AG04449 (cell line): ENCODE measurements at regions of chr15 and their contacts with region 1.

Region 1: DNA sequence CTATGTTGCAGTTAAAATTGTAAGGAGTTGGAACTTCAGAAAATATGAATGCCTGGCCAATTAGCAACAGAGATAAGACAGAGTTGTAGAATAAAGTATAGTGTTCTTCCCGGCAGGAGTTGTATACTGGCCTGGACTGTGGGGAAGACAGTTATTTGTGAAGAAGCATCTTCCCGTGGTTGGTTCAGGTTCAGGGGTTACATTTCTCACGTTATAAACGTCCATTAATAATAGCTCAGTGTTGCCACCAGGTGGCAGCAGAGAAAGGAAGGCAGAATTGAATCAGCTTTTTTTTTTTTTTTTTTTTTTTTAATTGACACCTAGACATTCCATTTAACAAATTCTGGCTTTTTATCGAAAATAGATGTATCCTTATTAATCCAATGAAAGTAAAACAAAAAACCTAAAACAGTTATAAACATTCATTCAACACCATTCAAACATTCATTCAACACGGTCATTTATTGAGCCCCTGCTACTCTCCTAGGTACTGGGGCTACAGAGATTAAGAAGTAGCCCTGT is 66.4 kb upstream of the NR2E3 start:
- DNase-seq: no peak
- H3K4me3 ChIP-seq: no peak overlapping the region
- CTCF ChIP-seq: peak; percentile 48

Region 2: GRCh38 chr15:71448688-71449114 is 295.2 kb before region 1 on chr15:
- CTCF ChIA-PET with region 1: interaction called, 18 read pairs
- POLR2A ChIA-PET with region 1: no interaction called
- DNase-seq: no peak
- H3K4me3 ChIP-seq: no peak overlapping the region
- CTCF ChIP-seq: peak; percentile 75

Region 3: GRCh38 chr15:71716990-71717389 is 26.9 kb before region 1 on chr15:
- CTCF ChIA-PET with region 1: interaction called, 12 read pairs
- POLR2A ChIA-PET with region 1: no interaction called
- DNase-seq: no peak
- H3K4me3 ChIP-seq: no peak overlapping the region
- CTCF ChIP-seq: no peak

Region 4: GRCh38 chr15:71761649-71762369 is 17.9 kb after region 1 on chr15:
- CTCF ChIA-PET with region 1: interaction called, 19 read pairs
- POLR2A ChIA-PET with region 1: no interaction called
- DNase-seq: no peak
- H3K4me3 ChIP-seq: no peak overlapping the region
- CTCF ChIP-seq: no peak

Region 5: DNA sequence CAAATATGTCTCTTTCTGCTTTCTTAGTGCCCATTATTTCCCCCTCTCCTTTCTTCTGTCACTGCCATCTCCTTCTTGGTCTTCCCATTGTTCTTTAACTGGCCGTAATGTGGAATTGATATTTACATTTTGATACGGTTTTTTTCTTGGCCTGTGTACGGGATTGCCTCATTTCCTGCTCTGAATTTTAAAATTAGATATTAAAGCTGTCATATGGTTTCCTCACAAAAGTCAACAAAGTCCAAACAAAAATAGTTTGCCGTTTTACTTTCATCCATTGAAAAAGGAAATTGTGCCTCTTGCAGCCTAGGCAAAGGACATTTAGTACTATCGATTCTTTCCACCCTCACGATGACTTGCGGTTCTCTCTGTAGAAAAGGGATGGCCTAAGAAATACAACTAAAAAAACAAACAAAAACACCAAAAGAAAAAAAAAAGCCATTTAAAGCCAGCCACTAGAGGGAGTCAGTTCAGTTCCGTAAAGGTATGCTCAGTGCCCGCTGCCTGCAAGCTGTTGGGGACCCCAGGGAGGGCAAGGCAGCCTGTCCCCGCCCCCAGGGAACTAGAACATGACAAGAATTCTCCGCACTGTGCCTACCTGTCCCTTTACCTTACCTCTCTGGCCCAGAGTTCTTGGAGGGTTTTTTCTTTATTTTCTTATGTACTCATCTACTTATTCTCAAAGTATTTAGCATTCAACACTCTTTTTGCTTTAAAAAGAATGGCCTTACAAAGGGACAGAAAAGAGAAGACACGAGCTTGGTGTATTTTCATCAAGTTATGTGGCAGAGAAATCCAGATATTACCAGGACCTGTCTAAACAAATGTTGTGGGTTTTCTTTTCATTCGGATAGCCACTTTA is 36.4 kb after region 1 on chr15:
- CTCF ChIA-PET with region 1: interaction called, 27 read pairs
- POLR2A ChIA-PET with region 1: no interaction called
- DNase-seq: no peak
- H3K4me3 ChIP-seq: no peak overlapping the region
- CTCF ChIP-seq: peak; percentile 61

Region 6: GRCh38 chr15:71800835-71801745 is 57.2 kb after region 1 on chr15:
- CTCF ChIA-PET with region 1: interaction called, 244 read pairs
- POLR2A ChIA-PET with region 1: interaction called, 3 read pairs
- DNase-seq: peak; percentile 73
- H3K4me3 ChIP-seq: no peak overlapping the region
- CTCF ChIP-seq: peak; percentile 64

Region 7: DNA sequence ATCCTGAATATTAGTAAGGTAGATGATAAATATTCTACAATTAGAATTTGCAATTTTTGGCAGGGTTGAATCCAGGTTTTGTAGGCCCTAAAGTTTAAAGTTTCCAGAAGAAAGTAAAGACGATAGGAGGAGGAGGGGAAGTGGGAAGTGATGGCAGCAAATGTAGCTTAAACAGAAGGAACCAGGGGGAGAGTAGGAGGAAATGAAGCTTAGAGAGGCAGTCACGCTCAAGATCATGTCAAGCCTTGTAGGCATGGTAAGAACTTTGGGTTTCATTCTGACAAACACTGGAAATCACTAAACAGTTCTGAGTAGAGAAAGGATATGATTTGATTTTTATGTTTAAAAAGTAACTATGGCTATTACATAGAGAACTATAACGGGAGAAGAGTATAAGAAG is 130.3 kb after region 1 on chr15:
- CTCF ChIA-PET with region 1: no interaction called
- POLR2A ChIA-PET with region 1: no interaction called
- DNase-seq: no peak
- H3K4me3 ChIP-seq: no peak overlapping the region
- CTCF ChIP-seq: no peak